ENCODE measurements at regions of chr10 and their contacts with region 1.

Region 1: GRCh38 chr10:27558612-27559020 is 54.5 kb downstream of the RAB18 start:
- DNase-seq: no peak
- ATAC-seq: peak; percentile 81

Region 2: GRCh38 chr10:27446091-27446918 is 112.3 kb before region 1 on chr10:
- intact Hi-C with region 1: loop called (anchors 5 kb)
- DNase-seq: no peak
- ATAC-seq: no peak

Measured in Right ventricle myocardium inferior (tissue), 1 donor.